ENCODE measurements at regions of chr2 and their contacts with region 1.

Region 1: DNA sequence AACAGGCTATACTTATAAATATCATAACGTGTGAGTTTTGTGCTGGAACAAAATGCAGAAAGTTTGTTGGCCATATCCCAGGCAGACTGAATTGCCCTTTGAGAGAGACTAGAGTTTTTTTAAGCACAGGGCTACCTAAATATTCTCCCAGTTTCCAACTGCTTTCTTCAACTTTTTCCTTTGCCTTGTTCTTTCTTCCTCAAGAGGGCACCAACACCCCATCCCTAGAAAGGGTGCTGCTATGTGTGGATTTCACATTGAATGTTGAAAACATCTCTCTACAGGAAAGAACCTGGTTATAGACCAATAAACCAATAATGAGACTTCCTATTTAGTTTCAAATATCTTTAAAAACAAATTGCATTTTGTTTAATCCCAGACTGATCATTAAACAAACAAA is 87.9 kb downstream of the ICOS start:
- DNase-seq: peak; percentile 47
- H3K4me3 Mint-ChIP-seq: no peak overlapping the region
- H3K27ac Mint-ChIP-seq: no peak overlapping the region
- H3K4me1 Mint-ChIP-seq: peaks cover 64% of the 10 kb centered on the region
- H3K27me3 Mint-ChIP-seq: no peaks in the 10 kb centered on the region

Region 2: DNA sequence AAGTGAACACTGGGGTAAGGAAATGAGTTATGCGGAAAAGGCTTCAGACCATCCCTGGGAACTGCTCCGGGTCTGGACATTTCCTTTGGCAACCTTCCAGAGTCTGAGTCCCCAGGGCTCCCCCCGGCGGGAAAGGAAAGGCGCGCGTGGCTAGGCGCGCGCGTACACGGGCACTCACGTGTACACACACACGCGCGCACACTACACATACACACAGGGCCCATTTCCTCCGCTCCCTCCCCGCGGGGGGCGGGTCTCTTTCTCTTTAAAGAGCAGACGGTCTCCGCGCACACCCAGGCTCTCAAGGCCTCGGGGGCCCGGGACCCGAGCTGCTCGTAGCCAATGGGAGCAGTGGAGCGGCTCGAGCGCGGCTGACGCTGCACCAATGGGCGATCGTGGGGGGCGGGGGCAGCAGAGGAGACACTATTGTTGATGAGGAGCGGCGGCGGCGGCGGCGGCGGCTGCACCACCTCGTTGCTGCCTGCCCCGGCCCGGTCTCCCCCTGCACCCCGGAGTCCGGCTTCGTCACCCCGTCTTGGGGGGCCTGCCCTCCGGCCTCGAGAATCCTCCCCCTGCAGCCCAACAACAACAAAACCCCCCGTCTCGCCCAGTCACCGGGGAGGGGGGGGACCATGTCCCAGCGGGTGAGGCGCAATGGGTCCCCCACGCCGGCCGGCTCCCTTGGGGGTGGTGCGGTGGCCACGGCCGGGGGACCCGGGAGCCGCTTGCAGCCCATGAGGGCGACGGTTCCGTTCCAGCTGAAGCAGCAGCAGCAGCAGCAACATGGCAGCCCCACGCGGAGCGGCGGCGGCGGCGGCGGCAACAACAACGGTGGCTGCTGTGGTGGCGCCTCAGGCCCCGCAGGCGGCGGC is 1389.7 kb before region 1 on chr2 and contains the start of gene FAM117B:
- CTCF ChIA-PET with region 1: no interaction called
- POLR2A ChIA-PET with region 1: no interaction called
- intact Hi-C with region 1: loop called (anchors 10 kb)
- DNase-seq: peak; percentile 99
- H3K4me3 Mint-ChIP-seq: peak within 1 kb of the TSS; percentile 95
- H3K27ac Mint-ChIP-seq: peak within 1 kb of the TSS; percentile 94
- H3K4me1 Mint-ChIP-seq: peaks cover 43% of the 10 kb centered on the region
- H3K27me3 Mint-ChIP-seq: no peaks in the 10 kb centered on the region
- total RNA-seq, gene FAM117B: 5.8 to 5.9 TPM

Region 3: DNA sequence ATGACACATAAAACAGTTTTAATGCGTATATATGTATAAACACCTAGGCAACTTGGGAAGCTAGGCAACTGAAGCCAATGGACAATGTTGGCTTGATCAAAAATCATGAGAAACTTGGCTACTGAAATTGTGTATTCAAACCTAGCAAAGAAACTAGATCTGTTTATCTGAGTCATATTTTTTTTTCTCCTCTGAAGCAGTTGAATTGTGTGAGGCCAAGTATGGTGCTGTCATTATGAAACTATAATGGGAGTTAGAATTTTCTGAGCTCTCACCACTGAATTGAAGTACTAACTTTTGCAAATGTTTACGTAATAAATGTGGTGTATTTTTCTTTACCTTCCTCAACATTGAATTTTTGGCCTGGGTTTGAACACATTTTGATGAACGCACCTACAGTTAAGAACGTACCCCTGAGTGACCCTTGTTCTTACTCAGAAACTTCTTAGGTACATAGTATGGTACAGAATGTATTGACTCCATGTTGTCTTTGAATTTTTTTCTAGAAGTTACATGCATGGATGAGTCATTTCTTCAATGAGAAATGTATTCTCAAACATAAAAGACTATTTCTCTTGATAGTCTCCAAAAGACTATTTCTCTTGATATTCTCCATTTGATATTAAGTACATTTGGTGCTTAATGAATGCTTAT is 294.3 kb before region 1 on chr2:
- CTCF ChIA-PET with region 1: no interaction called
- POLR2A ChIA-PET with region 1: no interaction called
- intact Hi-C with region 1: loop called (anchors 5 kb)
- DNase-seq: no peak
- H3K4me3 Mint-ChIP-seq: peak overlapping the region; percentile 47
- H3K27ac Mint-ChIP-seq: peak overlapping the region; percentile 99
- H3K4me1 Mint-ChIP-seq: peaks cover 93% of the 10 kb centered on the region
- H3K27me3 Mint-ChIP-seq: no peaks in the 10 kb centered on the region

Region 4: DNA sequence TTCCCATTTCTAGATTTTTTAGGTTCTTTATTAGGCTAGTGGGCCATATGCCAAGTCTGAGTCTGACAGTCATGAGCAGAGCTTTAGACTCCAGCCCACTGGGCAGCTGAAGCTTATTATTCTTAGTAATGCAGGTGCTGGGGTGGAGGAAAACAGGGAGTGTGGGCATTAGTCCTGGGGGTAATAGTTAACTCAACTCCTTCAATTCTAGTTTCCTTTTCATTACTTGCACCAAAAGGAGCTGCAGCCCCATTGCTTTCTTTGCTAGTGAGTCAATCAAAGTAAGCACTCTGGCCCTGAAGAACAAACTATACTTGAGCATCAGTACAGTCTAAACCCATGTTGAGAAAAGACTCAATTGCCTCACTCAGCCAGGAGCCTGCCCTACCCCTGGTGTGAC is 52.4 kb before region 1 on chr2:
- CTCF ChIA-PET with region 1: no interaction called
- POLR2A ChIA-PET with region 1: interaction called, 4 read pairs
- intact Hi-C with region 1: loop called (anchors 1 kb)
- DNase-seq: no peak
- H3K4me3 Mint-ChIP-seq: no peak overlapping the region
- H3K27ac Mint-ChIP-seq: no peak overlapping the region
- H3K4me1 Mint-ChIP-seq: peaks cover 26% of the 10 kb centered on the region
- H3K27me3 Mint-ChIP-seq: no peaks in the 10 kb centered on the region

Region 5: DNA sequence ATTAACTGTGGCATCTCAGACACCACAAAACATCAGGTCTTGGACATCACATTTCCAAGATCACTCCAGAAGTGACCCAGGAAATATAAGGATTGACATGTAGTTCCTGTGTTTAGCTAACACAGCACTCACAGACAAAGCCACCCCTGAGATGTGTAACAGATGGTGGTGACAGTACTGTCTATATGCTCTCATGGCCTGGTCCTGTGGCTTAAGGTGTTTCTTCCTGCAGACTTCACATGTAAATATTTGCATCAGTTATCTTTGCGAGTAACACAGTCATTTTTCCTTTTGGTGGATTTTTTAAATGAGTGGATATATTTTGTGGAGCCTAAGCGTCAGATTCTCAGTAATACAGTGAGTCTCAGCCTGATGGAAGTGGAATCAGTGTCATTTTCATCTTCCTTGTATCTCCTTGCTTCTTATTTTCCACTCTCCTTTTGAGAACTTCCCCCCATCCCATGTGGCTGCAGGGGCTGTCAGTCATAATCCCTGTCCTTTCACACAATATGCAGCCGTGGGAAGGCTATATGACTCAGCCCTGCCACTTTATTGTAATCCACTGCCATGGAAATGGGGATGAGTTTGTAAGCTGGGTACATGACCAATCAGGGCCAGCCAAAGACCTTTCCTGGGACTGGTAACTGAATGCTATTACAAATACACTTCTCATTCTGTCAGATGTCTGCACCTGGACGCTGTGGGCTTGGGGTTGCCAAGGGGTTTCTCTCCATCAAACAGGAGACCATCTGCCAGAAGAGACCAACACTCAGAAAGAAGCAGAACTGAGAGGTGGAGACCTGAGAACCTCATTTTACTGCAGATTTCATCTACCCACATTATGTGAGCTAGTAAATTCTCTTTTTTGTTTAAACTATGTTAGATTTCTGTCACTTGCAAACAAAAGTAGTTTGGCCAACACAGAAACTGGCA is 13.6 kb before region 1 on chr2:
- CTCF ChIA-PET with region 1: interaction called, 5 read pairs
- POLR2A ChIA-PET with region 1: interaction called, 13 read pairs
- intact Hi-C with region 1: loop called (anchors 1 kb)
- DNase-seq: peak; percentile 49
- H3K4me3 Mint-ChIP-seq: peak overlapping the region; percentile 56
- H3K27ac Mint-ChIP-seq: peak overlapping the region; percentile 78
- H3K4me1 Mint-ChIP-seq: peaks cover 87% of the 10 kb centered on the region
- H3K27me3 Mint-ChIP-seq: no peaks in the 10 kb centered on the region

Region 6: DNA sequence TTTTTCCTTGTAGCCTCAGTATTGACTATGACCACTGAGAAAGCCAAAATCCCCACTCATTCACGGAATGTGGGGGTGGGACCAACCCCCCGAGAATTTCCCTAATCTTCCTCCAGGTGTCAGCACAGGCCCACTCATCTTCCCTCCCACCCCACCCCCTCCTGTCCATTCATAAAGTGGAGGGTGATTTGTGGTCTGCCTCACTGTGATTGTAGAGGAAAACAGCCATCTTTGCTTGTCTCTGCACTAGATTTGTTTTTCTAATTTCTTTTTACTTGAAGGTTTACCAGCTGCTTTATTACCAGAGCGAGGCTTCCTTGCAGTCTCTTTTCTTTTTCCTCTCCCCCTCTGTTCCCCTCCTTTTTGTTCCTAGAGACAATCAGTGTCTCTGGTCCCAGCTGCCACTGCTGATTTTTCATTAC is 83.8 kb after region 1 on chr2:
- CTCF ChIA-PET with region 1: interaction called, 19 read pairs
- POLR2A ChIA-PET with region 1: no interaction called
- intact Hi-C with region 1: loop called (anchors 1 kb)
- DNase-seq: peak; percentile 78
- H3K4me3 Mint-ChIP-seq: peak overlapping the region; percentile 55
- H3K27ac Mint-ChIP-seq: peak overlapping the region; percentile 90
- H3K4me1 Mint-ChIP-seq: peaks cover 71% of the 10 kb centered on the region
- H3K27me3 Mint-ChIP-seq: peaks cover 4% of the 10 kb centered on the region

Region 7: DNA sequence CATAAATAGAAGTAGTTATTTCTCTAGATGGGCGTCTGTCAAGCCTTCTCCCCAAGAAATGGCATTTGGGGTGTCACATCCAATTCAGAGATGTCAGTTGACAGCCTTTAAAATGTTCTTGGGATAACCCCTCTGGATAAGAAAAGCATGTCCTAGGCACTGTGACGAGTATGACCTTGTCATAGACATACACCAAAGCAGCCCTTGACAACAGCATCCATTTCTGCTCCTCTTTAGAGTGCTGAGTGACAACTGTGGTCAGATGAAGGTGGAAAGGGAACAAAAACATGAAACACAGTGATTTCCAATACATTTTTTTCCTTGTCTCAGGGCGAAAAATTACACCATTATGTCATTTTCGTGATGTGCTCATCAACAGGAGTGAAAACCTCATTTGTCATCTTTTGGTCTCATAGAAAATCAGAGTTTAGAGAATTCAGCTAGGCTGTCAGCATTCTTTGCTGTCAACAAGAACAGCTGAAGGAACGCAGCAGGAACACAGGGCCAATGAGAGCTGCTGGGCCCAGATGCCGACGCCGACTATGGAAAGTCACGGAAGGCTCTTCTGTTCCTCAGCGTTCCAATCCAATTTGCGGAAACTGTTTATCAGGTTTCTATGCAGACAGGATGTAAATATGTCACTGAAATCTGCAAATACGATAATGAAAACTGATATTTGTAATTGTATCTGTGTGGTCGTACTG is 105.2 kb after region 1 on chr2:
- CTCF ChIA-PET with region 1: no interaction called
- POLR2A ChIA-PET with region 1: no interaction called
- intact Hi-C with region 1: no loop called
- DNase-seq: no peak
- H3K4me3 Mint-ChIP-seq: no peak overlapping the region
- H3K27ac Mint-ChIP-seq: no peak overlapping the region
- H3K4me1 Mint-ChIP-seq: no peaks in the 10 kb centered on the region
- H3K27me3 Mint-ChIP-seq: peaks cover 3% of the 10 kb centered on the region